Activated naive CD4-positive, alpha-beta T cell treated with anti-CD3 and anti-CD28 coated beads for 36 hours (primary cell): ENCODE measurements at regions of chr10 and their contacts with region 1.

Region 1: DNA sequence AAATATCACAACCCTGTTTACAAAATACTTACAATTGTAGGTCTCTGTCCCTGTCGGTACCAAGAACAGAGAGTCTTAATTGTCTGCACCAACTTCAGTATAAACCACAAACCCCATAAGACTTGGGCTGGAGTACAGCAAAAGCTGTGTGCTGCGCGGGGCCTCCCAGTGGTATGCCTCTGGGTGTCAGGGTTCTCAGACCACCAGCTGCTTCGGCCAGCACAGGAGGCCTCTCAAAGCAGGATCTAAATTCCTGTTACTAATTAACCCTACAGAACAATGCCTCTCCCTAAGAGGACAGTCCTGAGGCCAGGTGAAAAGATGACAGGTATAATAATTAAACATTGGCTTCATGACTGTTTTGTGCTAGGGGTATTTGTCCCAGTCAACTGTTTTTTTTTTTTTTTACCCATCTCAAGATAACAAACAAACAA is 957 bp upstream of the SVIL start:
- DNase-seq: no peak
- H3K4me3 Mint-ChIP-seq: no peak overlapping the region
- H3K27ac Mint-ChIP-seq: no peak overlapping the region
- H3K4me1 Mint-ChIP-seq: peaks cover 42% of the 10 kb centered on the region
- H3K27me3 Mint-ChIP-seq: no peaks in the 10 kb centered on the region

Region 2: GRCh38 chr10:29446327-29446726 is 189.4 kb before region 1 on chr10:
- CTCF ChIA-PET with region 1: no interaction called
- intact Hi-C with region 1: no loop called
- DNase-seq: no peak
- H3K4me3 Mint-ChIP-seq: no peak overlapping the region
- H3K27ac Mint-ChIP-seq: no peak overlapping the region
- H3K4me1 Mint-ChIP-seq: peaks cover 18% of the 10 kb centered on the region
- H3K27me3 Mint-ChIP-seq: no peaks in the 10 kb centered on the region

Region 3: GRCh38 chr10:29646238-29646902 is 10.6 kb after region 1 on chr10:
- CTCF ChIA-PET with region 1: interaction called, 4 read pairs
- intact Hi-C with region 1: loop called (anchors 1 kb)
- DNase-seq: peak; percentile 47
- H3K4me3 Mint-ChIP-seq: no peak overlapping the region
- H3K27ac Mint-ChIP-seq: no peak overlapping the region
- H3K4me1 Mint-ChIP-seq: peaks cover 35% of the 10 kb centered on the region
- H3K27me3 Mint-ChIP-seq: peaks cover 3% of the 10 kb centered on the region

Region 4: DNA sequence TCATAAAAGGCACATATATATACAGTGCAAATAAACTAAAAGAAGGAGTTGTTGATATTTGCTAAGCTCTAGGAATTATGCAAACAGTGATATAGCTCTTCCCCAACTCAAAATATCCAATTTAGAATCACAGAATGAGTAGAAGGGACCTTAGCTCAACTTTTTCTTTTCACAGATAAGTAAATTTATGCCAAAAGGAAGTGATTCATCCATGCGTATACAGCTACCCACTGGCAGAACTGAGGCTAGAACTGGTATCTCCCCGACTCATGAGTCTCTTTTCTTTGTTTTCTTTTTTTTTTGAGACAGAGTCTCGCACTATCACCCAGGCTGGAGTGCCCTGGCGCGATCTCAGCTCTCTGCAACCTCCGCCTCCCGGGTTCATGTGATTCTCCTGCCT is 53.3 kb after region 1 on chr10:
- CTCF ChIA-PET with region 1: no interaction called
- intact Hi-C with region 1: loop called (anchors 1 kb)
- DNase-seq: peak; percentile 50
- H3K4me3 Mint-ChIP-seq: no peak overlapping the region
- H3K27ac Mint-ChIP-seq: peak overlapping the region; percentile 30
- H3K4me1 Mint-ChIP-seq: peaks cover 39% of the 10 kb centered on the region
- H3K27me3 Mint-ChIP-seq: no peaks in the 10 kb centered on the region

Region 5: GRCh38 chr10:29811751-29812449 is 176.2 kb after region 1 on chr10:
- CTCF ChIA-PET with region 1: no interaction called
- intact Hi-C with region 1: loop called (anchors 5 kb)
- DNase-seq: peak; percentile 63
- H3K4me3 Mint-ChIP-seq: no peak overlapping the region
- H3K27ac Mint-ChIP-seq: no peak overlapping the region
- H3K4me1 Mint-ChIP-seq: peaks cover 27% of the 10 kb centered on the region
- H3K27me3 Mint-ChIP-seq: peaks cover 14% of the 10 kb centered on the region